OCI-LY7 (cell line): ENCODE measurements at regions of chr7 and their contacts with region 1.

Region 1: GRCh38 chr7:98315341-98315983 is 34.0 kb downstream of the BRI3 start:
- DNase-seq: peak; percentile 28
- H3K4me3 ChIP-seq: no peak overlapping the region
- H3K27ac ChIP-seq: peak overlapping the region; percentile 27
- H3K4me1 ChIP-seq: peaks cover 13% of the 10 kb centered on the region
- CTCF ChIP-seq: no peak

Region 2: DNA sequence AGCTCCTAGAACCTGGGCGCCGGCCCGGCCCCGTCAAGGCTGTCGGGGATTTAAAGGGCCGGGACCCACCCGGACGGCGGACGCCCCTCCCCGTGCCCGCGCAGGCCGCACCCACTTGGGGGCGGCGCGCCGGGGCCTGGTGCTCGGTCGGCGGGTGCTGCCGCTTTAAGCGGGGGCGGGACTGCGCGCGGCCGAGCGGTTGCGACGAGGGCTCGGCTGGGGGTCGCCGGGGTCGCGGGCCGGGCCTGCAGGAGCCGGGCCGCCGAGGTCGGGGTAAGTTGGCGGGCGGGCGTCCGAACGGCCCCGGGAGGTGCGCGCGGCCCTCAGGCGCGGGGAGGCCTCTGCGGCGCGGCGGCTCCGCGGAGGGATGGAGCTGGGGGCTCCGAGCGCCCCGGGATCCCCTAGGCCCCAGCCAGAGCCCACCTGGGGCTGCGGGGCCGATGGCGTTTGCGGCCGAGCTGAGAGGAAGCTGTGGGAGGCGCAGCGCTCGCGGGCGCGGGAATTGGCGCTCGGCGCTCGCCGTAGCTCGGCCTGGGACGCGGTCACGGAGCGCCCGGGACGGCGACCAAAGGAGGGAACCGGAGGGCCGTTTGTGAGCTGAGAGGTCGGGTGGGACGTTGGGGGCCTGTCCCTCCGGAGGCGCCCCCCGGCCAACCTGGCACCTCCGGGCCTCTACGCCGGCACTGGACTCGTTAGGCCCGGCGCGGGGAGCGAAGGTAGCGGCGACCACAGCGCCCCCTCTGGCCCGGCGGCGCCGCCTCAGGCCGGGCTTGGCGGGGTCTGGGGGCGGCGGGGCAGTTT is 563.1 kb after region 1 on chr7 and contains the start of gene TRRAP:
- CTCF ChIA-PET with region 1: no interaction called
- POLR2A ChIA-PET with region 1: no interaction called
- intact Hi-C with region 1: loop called (anchors 10 kb)
- DNase-seq: peak; percentile 85
- H3K4me3 ChIP-seq: peak within 1 kb of the TSS; percentile 97
- H3K27ac ChIP-seq: peak within 1 kb of the TSS; percentile 94
- H3K4me1 ChIP-seq: peaks cover 30% of the 10 kb centered on the region
- CTCF ChIP-seq: peak; percentile 79; the same call in 1 of the 2 replicates
- total RNA-seq, gene TRRAP: 43.4 and 50.4 TPM in 2 replicates